ENCODE measurements at regions of chr15 and their contacts with region 1.

Region 1: GRCh38 chr15:23039151-23039916 is at the start of gene TUBGCP5:
- DNase-seq: peak; percentile 99
- ATAC-seq: peak; percentile 96
- H3K4me3 ChIP-seq: peak within 1 kb of the TSS; percentile 81
- H3K27ac ChIP-seq: peak within 1 kb of the TSS; percentile 57
- H3K4me1 ChIP-seq: peaks cover 17% of the 10 kb centered on the region
- H3K27me3 ChIP-seq: no peaks in the 10 kb centered on the region
- CTCF ChIP-seq: no peak
- total RNA-seq, gene TUBGCP5: 33.4 and 63.0 TPM in 2 replicates

Region 2: GRCh38 chr15:22918056-22918455 is 121.3 kb before region 1 on chr15:
- CTCF ChIA-PET with region 1: no interaction called
- POLR2A ChIA-PET with region 1: no interaction called
- intact Hi-C with region 1: no loop called
- DNase-seq: peak; percentile 84
- ATAC-seq: peak; percentile 98
- H3K4me3 ChIP-seq: no peak overlapping the region
- H3K27ac ChIP-seq: no peak overlapping the region
- H3K4me1 ChIP-seq: peaks cover 17% of the 10 kb centered on the region
- H3K27me3 ChIP-seq: no peaks in the 10 kb centered on the region
- CTCF ChIP-seq: no peak

Region 3: GRCh38 chr15:22968366-22968765 is 71.0 kb before region 1 on chr15:
- CTCF ChIA-PET with region 1: no interaction called
- POLR2A ChIA-PET with region 1: no interaction called
- intact Hi-C with region 1: loop called (anchors 5 kb)
- DNase-seq: peak; percentile 84
- ATAC-seq: peak; percentile 100
- H3K4me3 ChIP-seq: 0 out of 2 replicates have a peak overlapping the region, but pooled peaks have one; percentile 14
- H3K27ac ChIP-seq: peak overlapping the region; percentile 80
- H3K4me1 ChIP-seq: peaks cover 17% of the 10 kb centered on the region
- H3K27me3 ChIP-seq: no peaks in the 10 kb centered on the region
- CTCF ChIP-seq: no peak

Region 4: GRCh38 chr15:22980189-22981050 is 58.9 kb before region 1 on chr15 and contains the start of gene CYFIP1:
- CTCF ChIA-PET with region 1: no interaction called
- POLR2A ChIA-PET with region 1: interaction called, 3 read pairs
- intact Hi-C with region 1: loop called (anchors 2 kb)
- DNase-seq: peak; percentile 91
- ATAC-seq: peak; percentile 82
- H3K4me3 ChIP-seq: peak within 1 kb of the TSS; percentile 86
- H3K27ac ChIP-seq: peak within 1 kb of the TSS; percentile 53
- H3K4me1 ChIP-seq: peaks cover 9% of the 10 kb centered on the region; the same call in 1 of the 2 replicates
- H3K27me3 ChIP-seq: no peaks in the 10 kb centered on the region
- CTCF ChIP-seq: no peak
- total RNA-seq, gene CYFIP1: 80.3 and 85.4 TPM in 2 replicates

Measured in PC-3 (cell line).